ENCODE measurements at regions of chr2 and their contacts with region 1.

Region 1: DNA sequence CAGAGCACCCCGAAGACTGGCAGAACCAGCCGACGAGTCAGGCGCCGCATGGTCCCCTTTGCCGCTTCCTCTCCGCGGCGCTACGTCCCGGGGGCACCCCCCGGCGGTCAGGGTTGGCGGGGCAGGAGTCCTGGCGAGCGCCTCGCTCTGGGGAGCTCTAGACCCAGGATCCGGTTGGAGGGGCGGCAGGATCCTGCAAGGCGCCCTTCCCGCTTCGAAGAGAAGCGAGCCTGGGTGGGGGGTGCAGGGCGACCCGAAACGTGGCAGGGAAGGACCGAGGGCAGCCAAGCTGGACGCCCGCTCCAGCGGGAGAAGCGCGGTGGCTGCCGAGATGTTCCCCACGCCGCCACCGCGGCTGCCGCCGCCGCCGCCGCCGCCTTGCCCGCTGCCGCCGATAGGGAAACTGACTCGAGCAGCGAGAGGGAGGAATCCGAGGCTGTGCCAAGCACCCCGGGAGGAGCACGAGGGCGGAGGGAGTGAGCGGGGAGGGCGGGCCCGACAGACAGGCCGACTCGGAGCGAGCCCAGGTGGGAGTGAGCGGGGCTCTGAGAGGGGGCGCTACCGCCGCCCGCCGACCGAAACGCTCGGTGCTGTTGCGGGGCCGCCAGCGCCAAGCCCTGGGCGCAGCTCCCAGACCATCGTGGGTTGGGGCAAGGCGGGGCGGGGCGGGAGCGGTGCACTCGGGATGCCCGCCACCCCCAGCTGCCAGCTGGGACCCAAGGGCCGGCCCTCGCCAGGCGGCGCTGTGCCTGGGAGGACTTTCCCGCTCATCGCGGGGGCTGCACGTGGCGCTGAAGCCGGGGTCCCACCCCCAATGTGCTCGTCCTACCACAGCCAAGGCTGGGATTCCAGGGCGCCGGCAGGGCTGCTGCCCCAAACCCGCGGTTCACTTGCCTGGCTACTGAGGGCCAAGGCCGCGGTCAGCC is at the start of gene GALNT14:
- DNase-seq: peak; percentile 64
- ATAC-seq: peak; percentile 76
- H3K4me3 Mint-ChIP-seq: peak within 1 kb of the TSS; percentile 85
- H3K27ac Mint-ChIP-seq: no peak within 1 kb of the TSS
- H3K4me1 Mint-ChIP-seq: peaks cover 8% of the 10 kb centered on the region
- H3K27me3 Mint-ChIP-seq: peaks cover 5% of the 10 kb centered on the region
- CTCF ChIP-seq: no peak
- total RNA-seq, gene GALNT14: 6.6 and 7.9 TPM in 2 replicates

Region 2: GRCh38 chr2:30862054-30862651 is 276.1 kb before region 1 on chr2:
- CTCF ChIA-PET with region 1: interaction called, 7 read pairs
- POLR2A ChIA-PET with region 1: no interaction called
- intact Hi-C with region 1: loop called (anchors 1 kb)
- DNase-seq: no peak
- ATAC-seq: peak; percentile 76
- H3K4me3 Mint-ChIP-seq: no peak overlapping the region
- H3K27ac Mint-ChIP-seq: no peak overlapping the region
- H3K4me1 Mint-ChIP-seq: peaks cover 18% of the 10 kb centered on the region
- H3K27me3 Mint-ChIP-seq: peaks cover 2% of the 10 kb centered on the region
- CTCF ChIP-seq: no peak

Region 3: GRCh38 chr2:31125918-31126695 is 12.2 kb before region 1 on chr2:
- CTCF ChIA-PET with region 1: no interaction called
- POLR2A ChIA-PET with region 1: no interaction called
- intact Hi-C with region 1: no loop called
- DNase-seq: no peak
- ATAC-seq: no peak
- H3K4me3 Mint-ChIP-seq: no peak overlapping the region
- H3K27ac Mint-ChIP-seq: no peak overlapping the region
- H3K4me1 Mint-ChIP-seq: no peaks in the 10 kb centered on the region
- H3K27me3 Mint-ChIP-seq: no peaks in the 10 kb centered on the region
- CTCF ChIP-seq: no peak

Region 4: DNA sequence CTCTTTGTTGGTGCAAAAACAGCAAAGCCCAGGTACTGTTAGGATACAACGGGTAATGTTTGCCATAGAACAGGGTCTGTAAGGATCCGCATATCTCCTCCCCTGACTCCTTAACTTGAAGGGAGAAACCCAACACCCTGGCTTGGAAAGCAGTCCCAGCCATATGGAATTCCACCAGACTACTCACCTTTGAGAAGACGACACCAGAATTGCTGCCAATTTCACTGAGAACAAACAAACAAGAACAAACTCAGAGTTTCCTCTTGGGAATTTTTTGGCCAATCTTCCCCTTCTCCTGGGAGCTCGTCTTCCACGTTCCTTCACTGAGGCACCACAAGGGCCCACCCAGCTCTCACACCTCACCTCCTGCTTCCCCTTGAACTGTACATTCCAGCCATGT is 49.8 kb after region 1 on chr2:
- CTCF ChIA-PET with region 1: no interaction called
- POLR2A ChIA-PET with region 1: no interaction called
- intact Hi-C with region 1: no loop called
- DNase-seq: no peak
- ATAC-seq: no peak
- H3K4me3 Mint-ChIP-seq: no peak overlapping the region
- H3K27ac Mint-ChIP-seq: no peak overlapping the region
- H3K4me1 Mint-ChIP-seq: no peaks in the 10 kb centered on the region
- H3K27me3 Mint-ChIP-seq: no peaks in the 10 kb centered on the region
- CTCF ChIP-seq: no peak

Region 5: GRCh38 chr2:31318361-31319336 is 180.3 kb after region 1 on chr2:
- CTCF ChIA-PET with region 1: interaction called, 3 read pairs
- POLR2A ChIA-PET with region 1: no interaction called
- intact Hi-C with region 1: loop called (anchors 5 kb)
- DNase-seq: peak; percentile 60
- ATAC-seq: peak; percentile 97
- H3K4me3 Mint-ChIP-seq: peak overlapping the region; percentile 66
- H3K27ac Mint-ChIP-seq: peak overlapping the region; percentile 83
- H3K4me1 Mint-ChIP-seq: peaks cover 51% of the 10 kb centered on the region
- H3K27me3 Mint-ChIP-seq: no peaks in the 10 kb centered on the region
- CTCF ChIP-seq: no peak